ENCODE measurements at regions of chr1 and their contacts with region 1.

Region 1: GRCh38 chr1:152071123-152071522 is 17.7 kb downstream of the TCHHL1 start:
- DNase-seq: no peak
- H3K4me3 ChIP-seq: no peak overlapping the region
- H3K27ac ChIP-seq: no peak overlapping the region
- H3K4me1 ChIP-seq: no peaks in the 10 kb centered on the region
- H3K27me3 ChIP-seq: no peaks in the 10 kb centered on the region
- CTCF ChIP-seq: no peak

Region 2: DNA sequence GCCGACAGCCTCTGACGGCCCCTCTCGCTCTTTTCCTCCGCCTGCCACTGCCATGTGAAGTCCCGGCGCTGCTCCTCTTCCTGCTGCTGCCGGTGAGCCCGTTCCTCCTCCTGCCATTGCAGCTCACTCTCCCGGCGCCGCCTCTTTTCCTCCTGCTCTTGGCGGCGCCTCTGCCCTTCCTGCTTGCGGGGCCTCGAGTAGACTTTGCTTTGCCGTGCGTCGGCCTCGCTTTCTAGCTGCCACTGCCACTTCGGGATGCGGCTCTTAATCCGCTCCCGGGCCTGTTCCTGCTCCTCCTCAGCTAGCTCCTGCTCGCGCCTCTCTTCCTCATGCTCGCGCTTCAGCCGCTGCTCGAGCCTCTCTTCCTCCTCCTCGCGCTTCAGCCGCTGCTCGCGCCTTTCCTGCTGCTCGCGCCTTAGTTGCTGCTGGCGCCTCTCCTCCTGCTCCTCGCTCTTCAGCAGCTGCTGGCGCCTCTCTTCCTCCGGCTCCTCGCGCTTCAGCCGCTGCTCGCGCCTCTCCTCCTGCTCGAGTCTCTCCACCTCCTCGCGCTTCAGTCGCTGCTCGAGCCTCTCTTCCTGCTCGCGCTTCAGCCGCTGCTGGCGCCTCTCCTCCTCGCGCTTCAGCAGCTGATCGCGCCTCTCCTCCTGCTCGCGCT is 39.9 kb after region 1 on chr1:
- CTCF ChIA-PET with region 1: no interaction called
- dilution Hi-C with region 1: no loop called
- in situ Hi-C with region 1: no loop called
- intact Hi-C with region 1: loop called (anchors 5 kb)
- DNase-seq: peak; percentile 71
- H3K4me3 ChIP-seq: peak overlapping the region; percentile 54 to 65 (median 55)
- H3K27ac ChIP-seq: no peak overlapping the region
- H3K4me1 ChIP-seq: peaks cover 51% of the 10 kb centered on the region
- H3K27me3 ChIP-seq: peaks cover 29% of the 10 kb centered on the region
- CTCF ChIP-seq: no peak

Region 3: GRCh38 chr1:152148981-152149380 is 77.9 kb after region 1 on chr1:
- CTCF ChIA-PET with region 1: no interaction called
- dilution Hi-C with region 1: loop called (anchors 5 kb)
- in situ Hi-C with region 1: no loop called
- intact Hi-C with region 1: no loop called
- DNase-seq: no peak
- H3K4me3 ChIP-seq: no peak overlapping the region
- H3K27ac ChIP-seq: no peak overlapping the region
- H3K4me1 ChIP-seq: no peaks in the 10 kb centered on the region
- H3K27me3 ChIP-seq: no peaks in the 10 kb centered on the region
- CTCF ChIP-seq: no peak